ENCODE measurements at regions of chr11 and their contacts with region 1.

Region 1: DNA sequence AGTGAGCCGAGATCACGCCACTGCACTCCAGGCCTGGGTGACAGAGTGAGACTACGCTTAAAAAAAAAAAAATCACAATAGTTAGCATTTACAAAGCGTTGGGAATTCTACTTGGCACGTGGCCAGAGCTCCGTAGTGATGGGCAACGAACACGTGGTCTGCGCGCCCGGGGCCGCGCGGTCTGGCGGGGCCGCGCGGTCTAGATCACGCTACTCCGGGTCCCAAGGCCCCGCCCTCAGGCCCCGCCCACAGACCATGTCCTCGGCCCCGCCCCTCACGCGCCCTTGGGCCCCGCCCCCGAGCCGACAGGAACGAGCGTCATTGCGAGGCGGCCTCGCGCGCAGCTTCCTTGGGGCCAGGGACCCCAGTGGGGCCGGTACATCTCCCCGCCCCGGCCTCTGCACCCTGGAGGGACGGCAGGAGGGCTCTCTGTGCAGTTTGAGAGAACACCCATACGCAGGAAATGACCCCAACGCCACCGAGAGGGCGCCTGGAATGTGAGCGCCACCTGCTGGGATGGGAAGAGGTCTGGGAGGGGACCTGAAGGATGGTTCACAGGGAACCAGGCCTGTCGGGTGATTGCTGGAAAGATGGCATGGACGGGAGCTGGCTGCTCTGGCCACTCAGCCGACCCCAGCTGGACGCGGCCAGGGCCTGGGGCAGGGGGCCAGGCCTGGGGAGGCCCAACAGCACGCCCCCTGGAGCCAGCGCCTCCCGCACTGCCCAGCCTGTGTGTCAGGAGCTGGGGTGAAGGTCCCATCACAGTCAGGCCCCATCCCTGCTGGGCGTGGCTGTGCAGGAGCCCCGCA is 2.0 kb upstream of the PTDSS2 start:
- DNase-seq: peak; percentile 96

Region 2: GRCh38 chr11:207208-207862 is 240.8 kb before region 1 on chr11 and contains the starts of genes BET1L and RIC8A:
- intact Hi-C with region 1: loop called (anchors 1 kb)
- DNase-seq: peak; percentile 98
- total RNA-seq, gene BET1L: 24.9 TPM
- total RNA-seq, gene RIC8A: 63.4 TPM

Region 3: DNA sequence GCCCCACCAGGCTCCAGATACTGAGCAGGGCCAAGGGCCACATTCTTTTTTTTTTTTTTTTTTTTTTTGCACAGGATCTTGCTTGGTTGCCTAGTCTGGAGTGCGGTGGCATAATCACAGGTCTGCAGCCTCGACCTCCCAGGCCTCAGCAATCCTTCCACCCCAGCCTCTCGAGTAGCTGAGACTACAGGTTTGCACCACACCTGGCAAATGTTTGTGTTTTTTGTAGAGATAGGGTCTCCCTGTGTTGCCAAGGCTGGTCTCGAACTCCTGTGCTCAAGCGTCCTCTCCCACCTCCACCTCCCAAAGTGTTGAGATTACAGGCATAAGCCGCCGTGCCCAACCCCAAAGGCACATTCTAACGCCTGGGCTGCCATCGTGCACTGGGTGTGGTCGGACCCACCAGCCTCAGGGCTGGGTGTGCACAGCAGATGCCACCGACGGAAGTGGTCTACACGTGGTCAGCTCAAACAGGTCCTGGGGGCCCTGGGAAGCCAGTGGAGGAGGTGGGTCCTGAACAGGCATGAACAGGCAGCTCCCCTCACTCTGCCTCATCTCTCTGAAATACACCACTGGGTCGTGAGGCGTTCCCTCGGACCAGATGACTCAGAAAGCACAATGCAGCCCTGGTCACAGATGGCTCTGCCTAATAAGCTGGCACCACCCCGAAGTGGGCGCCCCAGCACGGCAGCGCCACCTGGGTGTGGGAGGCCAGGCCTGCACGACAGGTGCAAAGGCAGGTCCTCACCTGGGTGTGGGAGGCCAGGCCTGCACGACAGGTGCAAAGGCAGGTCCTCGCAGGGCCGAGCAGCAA is 84.0 kb before region 1 on chr11:
- intact Hi-C with region 1: no loop called
- DNase-seq: peak; percentile 76

Region 4: GRCh38 chr11:406978-407739 is 41.0 kb before region 1 on chr11:
- intact Hi-C with region 1: loop called (anchors 5 kb)
- DNase-seq: peak; percentile 88

Region 5: DNA sequence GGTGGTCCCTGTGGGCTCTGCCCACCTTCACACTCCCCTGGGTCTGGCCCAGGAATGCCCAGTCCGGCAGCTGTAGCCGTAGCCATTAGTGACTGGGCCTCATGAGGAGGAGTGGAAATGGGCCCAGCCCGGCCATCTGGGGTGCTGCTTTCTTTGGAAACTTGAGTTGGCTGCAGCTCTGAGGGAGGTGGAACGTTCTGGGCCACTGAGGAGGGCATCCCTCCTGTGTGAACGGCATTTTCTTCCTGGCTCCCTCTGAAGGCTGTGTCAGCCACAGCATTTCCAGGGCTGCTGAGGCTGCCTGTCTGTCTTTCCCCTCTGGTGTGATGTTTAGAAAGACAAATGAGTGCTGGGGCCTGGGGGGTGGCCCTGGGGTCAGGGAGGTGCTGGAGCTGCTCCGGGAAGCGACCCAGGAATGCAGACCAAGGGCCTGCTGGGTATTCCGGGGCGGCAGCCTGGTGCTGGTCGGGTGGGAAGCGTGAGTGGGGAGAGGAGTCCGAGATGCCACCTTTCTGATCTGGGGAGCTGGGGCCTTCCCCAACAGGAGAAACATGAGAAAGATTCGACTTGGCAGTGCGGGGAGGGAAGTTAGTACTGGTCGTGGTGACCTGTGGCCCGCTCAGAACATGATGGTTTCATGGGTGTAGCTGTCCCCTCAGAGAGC is 29.1 kb after region 1 on chr11:
- intact Hi-C with region 1: no loop called
- DNase-seq: no peak

Region 6: GRCh38 chr11:518463-519250 is 70.5 kb after region 1 on chr11:
- intact Hi-C with region 1: loop called (anchors 2 kb)
- DNase-seq: peak; percentile 93

Region 7: DNA sequence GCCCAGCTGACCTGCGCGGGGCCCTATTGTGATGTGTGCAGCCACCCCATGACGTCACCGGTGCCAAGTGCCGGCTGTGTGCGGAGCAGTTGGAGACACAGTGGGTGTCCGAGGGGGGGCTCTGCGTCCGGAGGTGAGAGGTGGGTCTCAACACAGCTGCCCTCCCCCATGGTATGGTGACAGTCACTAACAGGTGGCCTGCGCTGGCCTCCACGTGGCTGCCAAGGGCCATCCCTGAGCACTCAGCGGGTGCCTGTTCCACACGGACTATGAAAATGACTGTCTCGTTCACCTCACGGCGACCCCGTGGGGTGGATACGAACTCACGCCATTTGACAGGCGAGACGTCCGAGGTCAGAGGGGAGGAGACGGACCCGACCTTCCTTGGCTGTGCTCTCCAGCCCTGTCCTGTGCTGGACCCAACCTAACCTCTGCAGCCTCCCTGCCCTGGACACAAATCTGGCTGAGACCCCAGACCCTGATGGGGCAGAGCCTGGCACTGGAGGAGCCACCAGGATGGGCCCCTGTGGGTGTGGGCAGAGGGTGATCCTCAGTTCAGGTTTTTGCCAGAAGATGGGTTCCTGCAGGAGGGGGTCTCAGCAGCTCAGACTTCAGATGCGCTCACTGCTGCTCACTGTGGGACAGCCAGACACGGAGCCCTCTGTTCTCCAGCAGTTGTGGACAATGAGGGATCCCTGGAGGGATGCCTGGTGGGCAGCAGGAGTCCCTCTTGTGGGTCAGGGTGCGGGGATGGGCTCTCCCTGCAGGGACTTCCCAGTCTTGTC is 80.9 kb after region 1 on chr11:
- intact Hi-C with region 1: no loop called
- DNase-seq: no peak

Measured in cardiac septum (tissue), 1 donor.